H1 (cell line): ENCODE measurements at regions of chr3 and their contacts with region 1.

Region 1: GRCh38 chr3:155382396-155383042 is 89.0 kb upstream of the STRIT1 start:
- DNase-seq: peak; percentile 72 to 87
- H3K4me3 ChIP-seq: no peak overlapping the region
- H3K27ac ChIP-seq: no peak overlapping the region
- H3K4me1 ChIP-seq: peaks cover 0 to 4% (median 3%) of the 10 kb centered on the region in 4 experiments; a peak in 3 of 7 replicates
- H3K27me3 ChIP-seq: no peaks in the 10 kb centered on the region
- CTCF ChIP-seq: peak; percentile 94 to 95 (median 94)
- EP300 ChIP-seq: no peak
- POLR2A ChIP-seq: no peak
- RAD21 ChIP-seq: peak; percentile 99 to 100

Region 2: GRCh38 chr3:154904328-154904727 is 478.2 kb before region 1 on chr3:
- CTCF ChIA-PET with region 1: no interaction called
- POLR2A ChIA-PET with region 1: no interaction called
- DNase-seq: peak in 1 of 2 experiments; percentile 5
- H3K4me3 ChIP-seq: no peak overlapping the region
- H3K27ac ChIP-seq: no peak overlapping the region
- H3K4me1 ChIP-seq: no peaks in the 10 kb centered on the region
- H3K27me3 ChIP-seq: peaks cover 0 to 1% (median 0%) of the 10 kb centered on the region in 4 experiments; a peak in 1 of 7 replicates
- CTCF ChIP-seq: peak in 2 of 3 experiments; percentile 50 to 62; a peak in 3 of 4 replicates
- EP300 ChIP-seq: no peak
- POLR2A ChIP-seq: no peak
- RAD21 ChIP-seq: peak; percentile 66 to 69

Region 3: GRCh38 chr3:155352900-155353490 is 29.5 kb before region 1 on chr3:
- CTCF ChIA-PET with region 1: interaction called, 11 read pairs
- POLR2A ChIA-PET with region 1: no interaction called
- DNase-seq: no peak
- H3K4me3 ChIP-seq: no peak overlapping the region
- H3K27ac ChIP-seq: no peak overlapping the region
- H3K4me1 ChIP-seq: peaks cover 2 to 6% (median 4%) of the 10 kb centered on the region in 4 experiments; a peak in 6 of 7 replicates
- H3K27me3 ChIP-seq: no peaks in the 10 kb centered on the region
- CTCF ChIP-seq: peak in 2 of 3 experiments; percentile 33 to 44; a peak in 2 of 4 replicates
- EP300 ChIP-seq: no peak
- POLR2A ChIP-seq: no peak
- RAD21 ChIP-seq: peak; percentile 70 to 74

Region 4: GRCh38 chr3:155370764-155371503 is 11.6 kb before region 1 on chr3:
- CTCF ChIA-PET with region 1: interaction called, 13 read pairs
- POLR2A ChIA-PET with region 1: interaction called, 3 read pairs
- DNase-seq: no peak
- H3K4me3 ChIP-seq: no peak overlapping the region
- H3K27ac ChIP-seq: no peak overlapping the region
- H3K4me1 ChIP-seq: peaks cover 0 to 27% (median 16%) of the 10 kb centered on the region in 4 experiments; a peak in 5 of 7 replicates
- H3K27me3 ChIP-seq: no peaks in the 10 kb centered on the region
- CTCF ChIP-seq: no peak
- EP300 ChIP-seq: no peak
- POLR2A ChIP-seq: no peak
- RAD21 ChIP-seq: no peak